Activated B cell treated with CpG ODN at 0.5 μM for 24 hours (primary cell): ENCODE measurements at regions of chr6 and their contacts with region 1.

Region 1: DNA sequence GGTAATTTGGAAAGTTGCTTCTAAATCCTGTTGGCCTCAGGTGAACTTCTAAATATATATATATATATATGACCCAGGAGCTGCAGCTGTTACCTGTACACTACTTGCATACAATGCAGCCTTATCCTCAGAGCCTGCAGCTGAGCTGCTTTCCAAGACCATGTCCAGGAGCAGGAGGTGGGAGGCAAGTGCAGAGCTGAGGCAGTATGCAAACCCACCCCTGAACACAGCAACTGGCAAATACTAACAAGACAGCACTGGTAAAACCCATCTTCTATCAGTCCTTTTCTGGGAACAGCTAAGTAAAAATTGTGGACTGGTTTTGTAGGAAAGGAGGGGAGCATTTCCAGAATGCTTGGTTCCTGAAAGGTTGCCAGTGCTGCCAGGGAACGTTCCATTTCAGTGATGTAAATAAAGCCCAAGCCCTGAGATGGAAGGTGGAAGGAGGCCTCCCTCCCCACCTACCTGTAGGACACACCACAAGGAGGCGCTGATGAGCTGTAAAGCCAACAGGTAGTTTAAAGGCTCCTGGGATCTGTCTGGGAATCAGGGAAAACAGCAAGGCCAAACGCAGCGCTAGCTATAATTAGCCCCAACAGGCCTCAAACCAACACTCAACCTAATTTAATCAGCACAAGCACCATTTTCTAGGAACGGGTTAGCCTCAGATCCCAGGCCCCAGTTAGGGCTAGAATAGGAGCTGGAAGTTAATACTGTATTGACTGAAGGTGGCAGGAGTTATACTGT is 93.8 kb upstream of the MAP7 start:
- DNase-seq: peak; percentile 63
- ATAC-seq: peak; percentile 59
- H3K4me3 Mint-ChIP-seq: no peak overlapping the region
- H3K27ac Mint-ChIP-seq: no peak overlapping the region
- H3K4me1 Mint-ChIP-seq: peaks cover 4% of the 10 kb centered on the region
- H3K27me3 Mint-ChIP-seq: no peaks in the 10 kb centered on the region
- CTCF ChIP-seq: peak; percentile 69

Region 2: GRCh38 chr6:136613477-136613876 is 30.5 kb before region 1 on chr6:
- CTCF ChIA-PET with region 1: interaction called, 14 read pairs
- POLR2A ChIA-PET with region 1: no interaction called
- intact Hi-C with region 1: no loop called
- DNase-seq: no peak
- ATAC-seq: no peak
- H3K4me3 Mint-ChIP-seq: no peak overlapping the region
- H3K27ac Mint-ChIP-seq: no peak overlapping the region
- H3K4me1 Mint-ChIP-seq: no peaks in the 10 kb centered on the region
- H3K27me3 Mint-ChIP-seq: no peaks in the 10 kb centered on the region
- CTCF ChIP-seq: no peak

Region 3: DNA sequence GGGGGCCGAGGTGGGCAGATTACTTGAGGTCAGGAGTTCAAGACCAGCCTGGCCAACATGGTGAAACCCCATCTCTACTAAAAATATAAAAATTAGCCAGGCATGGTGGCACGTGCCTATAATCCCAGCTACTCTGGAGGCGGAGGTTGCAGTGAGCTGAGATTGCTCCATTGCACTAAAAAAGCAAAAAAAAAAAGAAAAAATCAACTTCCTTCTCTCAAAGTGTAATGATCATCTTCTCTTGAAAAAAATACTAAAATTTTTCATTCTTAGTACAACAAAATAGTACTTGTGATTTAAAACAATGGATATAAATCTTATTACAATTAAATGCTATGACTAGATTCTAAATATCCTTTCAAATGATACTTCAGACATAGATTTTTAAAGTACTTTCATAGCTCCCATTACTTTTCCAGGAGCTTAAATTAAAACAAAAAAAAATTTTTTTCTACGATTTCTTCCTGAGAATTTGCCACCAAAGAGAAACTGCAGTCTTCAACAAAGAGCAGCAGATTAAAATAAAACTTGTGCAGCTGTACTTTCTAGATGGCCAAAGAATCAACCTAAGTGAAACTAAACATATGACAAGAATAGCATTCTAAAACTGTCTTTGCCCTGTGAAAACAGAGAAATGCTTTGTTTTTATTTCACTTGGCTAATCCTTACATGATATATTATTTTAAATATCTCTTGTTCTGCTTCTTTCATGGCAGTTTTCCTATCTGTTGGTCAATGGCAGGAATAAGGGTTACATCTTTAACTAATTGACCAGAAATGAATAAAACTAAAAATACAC is 73.1 kb after region 1 on chr6:
- CTCF ChIA-PET with region 1: interaction called, 12 read pairs
- POLR2A ChIA-PET with region 1: no interaction called
- intact Hi-C with region 1: loop called (anchors 5 kb)
- DNase-seq: no peak
- ATAC-seq: no peak
- H3K4me3 Mint-ChIP-seq: peak overlapping the region; percentile 48
- H3K27ac Mint-ChIP-seq: peak overlapping the region; percentile 81
- H3K4me1 Mint-ChIP-seq: peaks cover 72% of the 10 kb centered on the region
- H3K27me3 Mint-ChIP-seq: no peaks in the 10 kb centered on the region
- CTCF ChIP-seq: no peak

Region 4: GRCh38 chr6:136761227-136761922 is 117.4 kb after region 1 on chr6:
- CTCF ChIA-PET with region 1: interaction called, 21 read pairs
- POLR2A ChIA-PET with region 1: interaction called, 4 read pairs
- intact Hi-C with region 1: no loop called
- DNase-seq: no peak
- ATAC-seq: peak; percentile 26
- H3K4me3 Mint-ChIP-seq: peak overlapping the region; percentile 73
- H3K27ac Mint-ChIP-seq: peak overlapping the region; percentile 84
- H3K4me1 Mint-ChIP-seq: peaks cover 67% of the 10 kb centered on the region
- H3K27me3 Mint-ChIP-seq: no peaks in the 10 kb centered on the region
- CTCF ChIP-seq: no peak

Region 5: DNA sequence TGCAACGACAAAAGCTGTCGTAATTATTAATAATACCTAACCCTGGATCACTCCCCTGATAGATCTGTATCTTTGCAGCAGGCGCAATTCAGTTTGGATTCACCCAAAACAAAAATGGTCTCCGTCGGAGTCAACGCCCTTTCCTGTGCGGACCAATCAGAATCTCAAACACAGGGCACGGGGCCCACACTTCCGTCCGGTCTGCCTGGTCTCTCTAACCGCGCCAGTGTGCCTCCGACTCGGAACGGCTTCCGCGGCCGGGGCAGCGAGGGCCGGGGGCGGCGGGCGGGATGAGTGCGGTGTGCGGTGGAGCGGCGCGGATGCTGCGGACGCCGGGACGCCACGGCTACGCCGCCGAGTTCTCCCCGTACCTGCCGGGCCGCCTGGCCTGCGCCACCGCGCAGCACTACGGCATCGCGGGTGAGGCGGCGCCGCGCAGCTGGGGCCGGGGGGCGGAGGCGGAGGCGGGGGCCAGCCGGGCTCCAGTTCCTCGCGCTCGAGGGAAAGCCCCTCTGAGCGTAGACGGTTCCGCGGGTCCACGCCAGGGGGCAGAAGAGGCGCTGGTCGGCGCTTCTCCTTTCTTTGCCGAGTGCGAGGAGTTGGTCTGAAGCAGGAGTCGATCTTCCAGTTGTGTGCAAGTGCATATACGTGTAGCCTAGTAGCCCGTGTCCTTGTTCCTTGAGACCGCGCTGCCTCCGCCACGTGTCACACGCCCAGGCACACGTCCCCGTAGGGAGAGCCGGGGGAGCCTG is 178.5 kb after region 1 on chr6 and contains the start of gene PEX7:
- CTCF ChIA-PET with region 1: interaction called, 21 read pairs
- POLR2A ChIA-PET with region 1: interaction called, 3 read pairs
- intact Hi-C with region 1: loop called (anchors 1 kb)
- DNase-seq: peak; percentile 86
- ATAC-seq: peak; percentile 91
- H3K4me3 Mint-ChIP-seq: peak within 1 kb of the TSS; percentile 94
- H3K27ac Mint-ChIP-seq: peak within 1 kb of the TSS; percentile 98
- H3K4me1 Mint-ChIP-seq: peaks cover 16% of the 10 kb centered on the region
- H3K27me3 Mint-ChIP-seq: peaks cover 4% of the 10 kb centered on the region
- CTCF ChIP-seq: no peak
- total RNA-seq, gene PEX7: 5.0 and 6.8 TPM in 2 replicates

Region 6: GRCh38 chr6:136967876-136968752 is 324.1 kb after region 1 on chr6:
- CTCF ChIA-PET with region 1: interaction called, 3 read pairs
- POLR2A ChIA-PET with region 1: no interaction called
- intact Hi-C with region 1: loop called (anchors 1 kb)
- DNase-seq: peak; percentile 39
- ATAC-seq: peak; percentile 93
- H3K4me3 Mint-ChIP-seq: no peak overlapping the region
- H3K27ac Mint-ChIP-seq: no peak overlapping the region
- H3K4me1 Mint-ChIP-seq: peaks cover 4% of the 10 kb centered on the region
- H3K27me3 Mint-ChIP-seq: peaks cover 12% of the 10 kb centered on the region
- CTCF ChIP-seq: peak; percentile 22